ENCODE measurements at regions of chr2 and their contacts with region 1.

Region 1: GRCh38 chr2:24409700-24410556 is 49.6 kb upstream of the ITSN2 start:
- DNase-seq: peak; percentile 38
- H3K4me3 Mint-ChIP-seq: no peak overlapping the region
- H3K27ac Mint-ChIP-seq: no peak overlapping the region
- H3K4me1 Mint-ChIP-seq: no peaks in the 10 kb centered on the region
- H3K27me3 Mint-ChIP-seq: no peaks in the 10 kb centered on the region
- CTCF ChIP-seq: peak; percentile 82

Region 2: GRCh38 chr2:24334245-24334633 is 75.7 kb before region 1 on chr2:
- CTCF ChIA-PET with region 1: no interaction called
- intact Hi-C with region 1: no loop called
- DNase-seq: no peak
- H3K4me3 Mint-ChIP-seq: no peak overlapping the region
- H3K27ac Mint-ChIP-seq: no peak overlapping the region
- H3K4me1 Mint-ChIP-seq: peaks cover 28% of the 10 kb centered on the region
- H3K27me3 Mint-ChIP-seq: no peaks in the 10 kb centered on the region
- CTCF ChIP-seq: no peak

Region 3: GRCh38 chr2:24827321-24828237 is 417.7 kb after region 1 on chr2:
- CTCF ChIA-PET with region 1: interaction called, 9 read pairs
- intact Hi-C with region 1: loop called (anchors 1 kb)
- DNase-seq: peak; percentile 74
- H3K4me3 Mint-ChIP-seq: no peak overlapping the region
- H3K27ac Mint-ChIP-seq: no peak overlapping the region
- H3K4me1 Mint-ChIP-seq: no peaks in the 10 kb centered on the region
- H3K27me3 Mint-ChIP-seq: no peaks in the 10 kb centered on the region
- CTCF ChIP-seq: peak; percentile 64

Region 4: GRCh38 chr2:25088817-25089516 is 679.0 kb after region 1 on chr2:
- CTCF ChIA-PET with region 1: interaction called, 10 read pairs
- intact Hi-C with region 1: no loop called
- DNase-seq: no peak
- H3K4me3 Mint-ChIP-seq: no peak overlapping the region
- H3K27ac Mint-ChIP-seq: no peak overlapping the region
- H3K4me1 Mint-ChIP-seq: no peaks in the 10 kb centered on the region
- H3K27me3 Mint-ChIP-seq: peaks cover 41% of the 10 kb centered on the region
- CTCF ChIP-seq: no peak

Region 5: GRCh38 chr2:25131567-25132298 is 721.8 kb after region 1 on chr2:
- CTCF ChIA-PET with region 1: no interaction called
- intact Hi-C with region 1: loop called (anchors 2 kb)
- DNase-seq: peak; percentile 9
- H3K4me3 Mint-ChIP-seq: peak overlapping the region; percentile 44
- H3K27ac Mint-ChIP-seq: no peak overlapping the region
- H3K4me1 Mint-ChIP-seq: no peaks in the 10 kb centered on the region
- H3K27me3 Mint-ChIP-seq: peaks cover 70% of the 10 kb centered on the region
- CTCF ChIP-seq: no peak

Region 6: DNA sequence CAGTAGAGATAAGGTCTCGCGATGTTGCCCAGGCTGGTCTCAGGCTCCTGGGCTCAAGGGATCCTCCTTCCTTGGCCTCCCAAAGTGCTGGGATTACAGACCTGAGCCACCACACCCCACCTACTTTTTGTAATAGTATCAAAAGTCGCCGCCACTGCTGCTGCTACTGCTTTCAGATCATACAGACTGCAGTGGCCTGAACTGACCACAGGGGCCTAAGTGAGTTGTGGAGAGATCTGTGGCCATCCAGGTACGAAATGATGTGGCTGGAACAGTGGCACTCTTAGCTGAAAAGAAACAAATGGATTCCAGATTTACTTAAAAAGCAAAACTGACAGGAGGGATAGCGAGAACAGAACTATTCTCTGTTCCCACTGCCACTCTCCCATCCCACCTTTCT is 791.3 kb after region 1 on chr2:
- CTCF ChIA-PET with region 1: no interaction called
- intact Hi-C with region 1: loop called (anchors 1 kb)
- DNase-seq: no peak
- H3K4me3 Mint-ChIP-seq: no peak overlapping the region
- H3K27ac Mint-ChIP-seq: no peak overlapping the region
- H3K4me1 Mint-ChIP-seq: peaks cover 23% of the 10 kb centered on the region
- H3K27me3 Mint-ChIP-seq: no peaks in the 10 kb centered on the region
- CTCF ChIP-seq: no peak

Measured in Calu3 (cell line).